Colonic mucosa (tissue), 4 donors: ENCODE measurements at regions of chr20 and their contacts with region 1.

Region 1: DNA sequence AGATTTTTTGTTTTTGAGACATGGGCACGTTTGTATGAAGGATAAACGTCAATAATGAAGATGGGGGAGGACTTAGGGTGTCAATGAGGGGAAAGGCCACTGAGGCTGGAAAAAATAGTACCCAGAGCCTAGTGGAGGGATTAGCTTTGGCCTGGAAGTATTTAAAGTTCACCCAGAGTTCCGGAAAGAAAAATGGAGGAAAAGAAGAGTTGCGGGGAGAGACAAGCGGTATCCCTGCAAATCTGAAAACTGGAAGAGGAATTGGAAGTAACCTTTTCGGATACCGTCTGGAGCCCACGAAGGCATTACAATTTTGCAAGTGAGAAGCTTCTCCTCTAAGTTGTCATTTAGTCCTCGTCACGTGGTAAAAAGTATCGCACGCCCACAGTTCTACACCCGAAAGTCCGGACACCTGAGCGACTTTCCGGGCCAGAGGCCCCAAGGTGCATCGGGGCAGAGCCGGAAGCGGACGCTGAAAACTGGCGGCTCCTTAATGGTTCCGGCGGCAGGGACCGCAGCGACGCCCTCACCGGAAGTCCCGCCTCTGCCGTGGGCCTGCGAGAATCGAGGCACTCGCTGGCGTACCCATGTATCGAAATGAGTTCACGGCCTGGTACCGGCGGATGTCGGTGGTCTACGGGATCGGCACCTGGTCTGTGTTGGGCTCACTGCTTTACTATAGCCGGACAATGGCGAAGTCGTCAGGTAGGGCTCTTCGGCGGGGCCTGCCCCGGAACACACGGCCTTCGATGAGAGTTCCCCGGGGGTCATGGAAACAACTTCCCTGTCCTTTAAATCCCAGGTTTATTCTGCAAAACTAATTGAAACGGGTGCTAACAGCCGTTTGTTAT is at the start of gene SMIM26:
- DNase-seq: peak; percentile 96
- H3K4me3 ChIP-seq: peak within 1 kb of the TSS; percentile 58
- H3K27ac ChIP-seq: peak within 1 kb of the TSS; percentile 68
- H3K4me1 ChIP-seq: no peaks in the 10 kb centered on the region
- H3K27me3 ChIP-seq: no peaks in the 10 kb centered on the region
- CTCF ChIP-seq: no peak
- total RNA-seq, gene SMIM26: 67.9 to 78.1 TPM

Region 2: DNA sequence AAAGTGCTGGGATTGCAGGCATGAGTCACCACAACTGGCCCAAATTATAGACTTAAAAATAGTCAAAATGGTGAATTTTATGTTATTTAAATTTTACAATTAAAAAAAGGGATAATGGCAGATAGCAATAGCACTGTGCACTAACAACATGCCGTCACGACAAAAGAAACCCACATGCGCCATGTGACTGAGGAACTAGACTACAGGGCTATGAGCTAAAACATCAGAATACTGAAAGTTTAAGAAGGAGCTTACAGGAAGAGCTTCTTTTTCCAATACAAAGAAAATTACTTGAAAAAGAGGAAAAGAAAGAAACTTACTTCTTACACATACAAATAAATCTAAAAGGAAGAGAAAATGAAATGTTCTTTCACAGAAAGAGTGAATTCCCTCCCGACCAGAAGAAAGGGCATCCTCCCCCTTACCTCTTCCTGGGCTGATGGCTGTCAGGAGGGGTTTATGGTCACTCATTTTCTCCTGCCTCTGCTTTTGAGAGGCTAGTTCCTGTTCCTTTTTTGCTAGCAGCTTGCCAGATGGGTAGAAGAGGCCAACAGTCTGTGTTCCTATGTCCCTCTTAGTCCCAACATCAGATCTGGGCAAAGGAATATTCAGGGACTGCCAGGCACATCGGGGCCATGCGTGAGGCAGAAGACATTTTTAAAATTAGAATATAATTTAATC is 154.8 kb before region 1 on chr20:
- intact Hi-C with region 1: loop called (anchors 10 kb)
- DNase-seq: no peak
- H3K4me3 ChIP-seq: no peak overlapping the region
- H3K27ac ChIP-seq: no peak overlapping the region
- H3K4me1 ChIP-seq: no peaks in the 10 kb centered on the region
- H3K27me3 ChIP-seq: no peaks in the 10 kb centered on the region
- CTCF ChIP-seq: no peak

Region 3: DNA sequence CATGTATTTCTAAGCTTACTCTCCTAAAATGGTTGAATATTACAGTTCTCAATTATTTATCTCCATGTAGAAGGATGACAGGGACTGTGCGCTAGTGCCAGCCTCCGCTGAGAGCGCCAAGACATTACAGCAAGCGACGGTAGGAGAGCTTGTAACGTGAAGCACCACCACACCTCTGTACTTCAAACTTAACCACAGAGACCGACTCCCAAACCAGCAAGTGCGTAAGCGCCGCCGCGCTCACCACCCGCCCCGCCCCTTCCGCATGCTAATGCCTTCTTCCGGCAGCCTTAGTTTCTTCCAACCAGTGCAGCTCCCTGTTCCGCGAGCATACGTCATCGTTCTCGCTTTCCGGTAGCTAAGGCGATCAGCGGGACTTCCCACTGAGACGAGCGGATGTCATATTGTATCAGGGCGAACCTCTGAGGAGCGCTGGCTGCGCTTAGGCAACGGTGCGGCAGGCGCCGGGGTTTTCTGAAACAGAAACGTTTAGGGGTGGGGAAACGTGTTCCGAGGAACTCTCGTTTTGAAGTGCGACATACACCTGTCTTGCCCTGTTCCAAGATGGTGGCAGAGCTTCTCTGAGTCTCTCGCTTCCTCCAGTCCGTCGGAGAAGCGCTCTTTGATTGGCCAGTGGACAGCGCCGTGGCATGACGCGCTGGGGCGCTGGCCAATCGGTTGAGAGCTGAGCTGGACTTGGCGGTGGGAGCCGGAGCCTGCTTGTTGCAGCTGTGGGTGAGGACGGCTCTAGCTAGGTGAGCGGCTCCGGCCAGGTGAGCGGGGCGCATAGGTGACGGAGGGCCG is 59.7 kb before region 1 on chr20 and contains the start of gene SEC23B:
- intact Hi-C with region 1: loop called (anchors 5 kb)
- DNase-seq: peak; percentile 97
- H3K4me3 ChIP-seq: peak within 1 kb of the TSS; percentile 63
- H3K27ac ChIP-seq: peak within 1 kb of the TSS; percentile 95
- H3K4me1 ChIP-seq: peaks cover 5% of the 10 kb centered on the region
- H3K27me3 ChIP-seq: no peaks in the 10 kb centered on the region
- CTCF ChIP-seq: no peak
- total RNA-seq, gene SEC23B: 56.5 to 77.8 TPM